ENCODE measurements at regions of chr17 and their contacts with region 1.

Region 1: GRCh38 chr17:12492450-12492849 is 173.2 kb upstream of the MYOCD start:
- DNase-seq: no peak
- ATAC-seq: no peak

Region 2: DNA sequence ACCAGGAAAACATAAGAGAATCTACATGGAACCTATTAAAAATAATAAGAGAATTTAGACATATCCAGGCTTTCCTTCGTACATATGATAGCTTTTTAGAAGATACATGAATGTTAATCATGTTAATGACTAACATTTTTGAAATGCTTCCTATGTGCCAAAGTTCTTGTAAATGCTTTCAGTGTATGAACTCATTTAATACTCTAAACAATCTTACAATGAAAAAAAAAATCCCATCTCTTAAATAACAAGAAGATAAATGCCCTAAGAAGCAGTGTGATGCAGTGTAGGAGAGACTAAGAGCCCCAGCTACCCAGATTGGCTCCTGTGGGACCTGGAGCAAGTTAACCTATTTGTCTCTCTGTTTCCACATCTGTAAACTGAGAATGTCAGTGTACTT is 47.1 kb before region 1 on chr17:
- intact Hi-C with region 1: loop called (anchors 10 kb)
- DNase-seq: no peak
- ATAC-seq: no peak

Region 3: GRCh38 chr17:12545877-12546513 is 53.5 kb after region 1 on chr17:
- intact Hi-C with region 1: no loop called
- DNase-seq: no peak
- ATAC-seq: peak; percentile 80